A673 (cell line): ENCODE measurements at regions of chr7 and their contacts with region 1.

Region 1: DNA sequence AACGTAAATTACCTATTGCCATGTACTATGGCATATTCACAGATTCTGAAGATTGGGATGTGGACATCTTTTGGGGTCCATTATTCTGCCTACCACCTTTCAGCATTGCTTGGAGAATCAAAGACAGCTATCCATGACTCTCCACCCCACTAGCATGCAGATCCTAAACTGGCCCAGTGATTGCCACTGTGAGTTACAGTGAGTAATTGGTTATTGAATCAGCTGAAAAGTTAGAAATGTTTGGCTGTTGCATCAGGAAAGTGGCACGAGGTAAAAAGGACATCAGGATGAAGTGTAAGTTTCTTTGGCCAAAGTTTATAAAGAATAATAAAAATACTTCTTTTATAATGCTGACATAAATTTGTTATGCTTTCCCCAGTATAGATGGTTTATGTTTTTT is 148.2 kb upstream of the ETV1 start:
- DNase-seq: no peak
- H3K4me3 ChIP-seq: no peak overlapping the region
- H3K27ac ChIP-seq: no peak overlapping the region
- H3K4me1 ChIP-seq: no peaks in the 10 kb centered on the region
- H3K27me3 ChIP-seq: no peaks in the 10 kb centered on the region
- CTCF ChIP-seq: no peak

Region 2: GRCh38 chr7:13829914-13830900 is 307.5 kb before region 1 on chr7:
- CTCF ChIA-PET with region 1: no interaction called
- POLR2A ChIA-PET with region 1: no interaction called
- intact Hi-C with region 1: no loop called
- DNase-seq: no peak
- H3K4me3 ChIP-seq: no peak overlapping the region
- H3K27ac ChIP-seq: no peak overlapping the region
- H3K4me1 ChIP-seq: peaks cover 11% of the 10 kb centered on the region
- H3K27me3 ChIP-seq: no peaks in the 10 kb centered on the region
- CTCF ChIP-seq: no peak

Region 3: GRCh38 chr7:14233076-14233867 is 95.6 kb after region 1 on chr7:
- CTCF ChIA-PET with region 1: no interaction called
- POLR2A ChIA-PET with region 1: no interaction called
- intact Hi-C with region 1: no loop called
- DNase-seq: peak; percentile 13
- H3K4me3 ChIP-seq: no peak overlapping the region
- H3K27ac ChIP-seq: no peak overlapping the region
- H3K4me1 ChIP-seq: no peaks in the 10 kb centered on the region
- H3K27me3 ChIP-seq: no peaks in the 10 kb centered on the region
- CTCF ChIP-seq: no peak

Region 4: GRCh38 chr7:14403587-14403986 is 265.9 kb after region 1 on chr7:
- CTCF ChIA-PET with region 1: no interaction called
- POLR2A ChIA-PET with region 1: interaction called, 11 read pairs
- intact Hi-C with region 1: no loop called
- DNase-seq: no peak
- H3K4me3 ChIP-seq: no peak overlapping the region
- H3K27ac ChIP-seq: no peak overlapping the region
- H3K4me1 ChIP-seq: no peaks in the 10 kb centered on the region
- H3K27me3 ChIP-seq: no peaks in the 10 kb centered on the region
- CTCF ChIP-seq: no peak